Right cardiac atrium (tissue), 5 donors: ENCODE measurements at regions of chr4 and their contacts with region 1.

Region 1: GRCh38 chr4:42519803-42520417 is 122.6 kb downstream of the SHISA3 start:
- DNase-seq: no peak
- ATAC-seq: peak in 1 of 2 donors; percentile 47
- H3K4me3 ChIP-seq: no peak overlapping the region
- H3K27ac ChIP-seq: no peak overlapping the region
- H3K4me1 ChIP-seq: no peaks in the 10 kb centered on the region
- H3K27me3 ChIP-seq: no peaks in the 10 kb centered on the region

Region 2: DNA sequence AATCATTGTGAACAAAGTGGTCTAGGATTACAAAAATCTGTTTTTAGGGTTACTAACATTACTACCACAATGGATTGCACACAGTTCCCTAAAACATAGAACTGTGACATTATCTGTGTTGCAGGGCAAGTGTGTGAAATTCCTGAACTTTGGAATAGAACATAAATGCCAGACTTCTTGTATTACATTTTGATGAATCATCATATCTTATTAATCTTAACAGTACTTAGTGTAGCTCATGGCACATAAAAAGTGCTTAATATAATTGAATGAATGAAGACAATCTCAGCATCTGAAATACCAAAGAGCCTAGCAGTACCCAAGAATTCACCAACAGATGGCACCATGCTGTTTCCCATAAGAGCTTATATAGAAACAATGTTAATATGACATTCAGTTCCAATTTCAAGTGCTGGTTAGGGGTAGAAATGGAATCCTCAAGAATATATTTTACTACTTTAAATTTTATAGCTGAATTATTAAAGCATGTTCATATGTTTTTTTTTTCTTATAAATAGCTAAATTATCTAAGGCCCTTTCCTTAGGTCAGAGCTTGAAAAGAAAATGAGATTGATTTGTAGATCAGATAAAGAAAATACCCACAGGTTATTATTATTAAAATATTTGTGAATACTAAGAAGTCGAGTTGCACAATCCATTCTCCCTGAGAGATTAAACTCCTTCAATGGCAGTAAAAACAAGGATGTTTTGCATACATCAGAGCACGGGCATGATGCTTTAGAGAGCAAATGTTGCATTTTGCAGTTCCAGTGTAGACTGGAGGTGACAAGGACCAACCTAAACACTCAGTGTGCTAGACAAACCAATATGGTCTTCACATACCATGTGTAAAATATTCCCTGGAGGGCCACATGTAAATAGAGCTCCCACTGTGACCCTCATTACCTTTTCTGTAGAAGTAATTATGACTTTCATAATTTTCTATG is 148.3 kb before region 1 on chr4:
- intact Hi-C with region 1: loop called in 3 of 4 experiments (anchors 5 kb)
- DNase-seq: no peak
- ATAC-seq: peak in 1 of 2 donors; percentile 45
- H3K4me3 ChIP-seq: no peak overlapping the region
- H3K27ac ChIP-seq: no peak overlapping the region
- H3K4me1 ChIP-seq: no peaks in the 10 kb centered on the region
- H3K27me3 ChIP-seq: no peaks in the 10 kb centered on the region